H1 (cell line): ENCODE measurements at regions of chr1 and their contacts with region 1.

Region 1: DNA sequence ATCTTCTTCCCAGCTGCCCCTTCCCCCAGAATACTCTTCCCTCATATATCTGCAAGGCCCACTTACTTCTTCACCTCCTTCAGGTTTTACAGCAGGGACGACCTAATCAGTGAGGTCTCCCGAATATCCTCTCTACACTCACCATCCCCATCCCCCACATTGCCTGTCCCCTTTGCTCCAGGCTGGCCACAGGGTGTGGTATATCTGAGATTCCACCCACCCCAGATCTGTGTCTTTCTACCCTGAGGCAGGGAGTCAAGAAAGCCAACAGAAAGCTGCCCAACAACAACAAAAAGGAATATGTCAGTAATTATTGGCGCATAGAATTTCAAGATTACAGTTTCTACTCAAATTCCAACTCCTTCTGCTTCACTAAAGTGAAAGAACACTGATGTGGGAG is 30.0 kb upstream of the OPRD1 start:
- DNase-seq: no peak
- H3K4me3 ChIP-seq: no peak overlapping the region
- H3K27ac ChIP-seq: no peak overlapping the region
- H3K4me1 ChIP-seq: no peaks in the 10 kb centered on the region
- H3K27me3 ChIP-seq: no peaks in the 10 kb centered on the region
- CTCF ChIP-seq: no peak
- EP300 ChIP-seq: no peak
- POLR2A ChIP-seq: no peak
- RAD21 ChIP-seq: no peak

Region 2: GRCh38 chr1:28792644-28793121 is 10.7 kb after region 1 on chr1:
- CTCF ChIA-PET with region 1: interaction called, 35 read pairs
- POLR2A ChIA-PET with region 1: interaction called, 5 read pairs
- DNase-seq: no peak
- H3K4me3 ChIP-seq: no peak overlapping the region
- H3K27ac ChIP-seq: no peak overlapping the region
- H3K4me1 ChIP-seq: peaks cover 0 to 8% (median 2%) of the 10 kb centered on the region in 4 experiments; a peak in 2 of 7 replicates
- H3K27me3 ChIP-seq: no peaks in the 10 kb centered on the region
- CTCF ChIP-seq: no peak
- EP300 ChIP-seq: no peak
- POLR2A ChIP-seq: no peak
- RAD21 ChIP-seq: no peak

Region 3: DNA sequence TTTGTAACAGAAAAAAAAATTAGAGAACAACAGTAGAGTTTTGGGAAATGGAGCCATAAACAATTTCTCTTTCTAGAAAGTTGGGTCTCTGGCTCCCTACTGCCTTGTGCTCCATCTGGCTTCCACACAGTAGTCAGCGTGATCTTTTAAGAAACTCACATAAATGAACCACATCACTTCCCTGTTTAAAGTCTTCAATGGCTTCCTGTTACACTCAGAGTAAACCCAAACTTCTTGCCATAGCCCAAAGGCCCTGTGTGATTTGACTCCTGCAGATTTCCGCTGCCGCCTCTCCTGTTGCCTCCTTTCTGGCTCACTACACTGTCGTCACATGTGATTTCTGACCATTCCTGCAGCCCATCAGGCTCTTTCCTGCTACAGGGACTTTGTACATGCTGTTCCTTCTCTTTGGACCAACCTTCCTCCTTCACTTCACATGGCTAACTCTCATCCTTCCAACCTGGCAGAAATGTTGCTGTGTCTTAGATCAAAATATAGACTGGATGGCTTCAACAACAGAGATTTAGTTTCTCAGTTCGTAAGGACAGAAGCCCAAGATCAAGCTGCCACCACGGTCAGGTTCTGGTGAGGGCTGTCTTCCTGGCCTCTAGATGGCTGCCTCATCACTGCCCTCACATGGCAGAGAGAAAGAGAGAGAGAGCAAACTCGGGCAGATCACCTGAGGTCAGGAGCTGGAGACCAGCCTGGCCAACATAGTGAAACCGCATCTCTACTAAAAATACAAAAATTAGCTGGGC is 64.0 kb after region 1 on chr1:
- CTCF ChIA-PET with region 1: interaction called, 16 read pairs
- POLR2A ChIA-PET with region 1: no interaction called
- DNase-seq: no peak
- H3K4me3 ChIP-seq: no peak overlapping the region
- H3K27ac ChIP-seq: peak overlapping the region; percentile 11; the same call in 1 of the 2 replicates
- H3K4me1 ChIP-seq: no peaks in the 10 kb centered on the region; a peak in 1 of 7 replicates
- H3K27me3 ChIP-seq: no peaks in the 10 kb centered on the region
- CTCF ChIP-seq: peak; percentile 42 to 46 (median 43)
- EP300 ChIP-seq: no peak
- POLR2A ChIP-seq: no peak
- RAD21 ChIP-seq: peak; percentile 46 to 51

Region 4: DNA sequence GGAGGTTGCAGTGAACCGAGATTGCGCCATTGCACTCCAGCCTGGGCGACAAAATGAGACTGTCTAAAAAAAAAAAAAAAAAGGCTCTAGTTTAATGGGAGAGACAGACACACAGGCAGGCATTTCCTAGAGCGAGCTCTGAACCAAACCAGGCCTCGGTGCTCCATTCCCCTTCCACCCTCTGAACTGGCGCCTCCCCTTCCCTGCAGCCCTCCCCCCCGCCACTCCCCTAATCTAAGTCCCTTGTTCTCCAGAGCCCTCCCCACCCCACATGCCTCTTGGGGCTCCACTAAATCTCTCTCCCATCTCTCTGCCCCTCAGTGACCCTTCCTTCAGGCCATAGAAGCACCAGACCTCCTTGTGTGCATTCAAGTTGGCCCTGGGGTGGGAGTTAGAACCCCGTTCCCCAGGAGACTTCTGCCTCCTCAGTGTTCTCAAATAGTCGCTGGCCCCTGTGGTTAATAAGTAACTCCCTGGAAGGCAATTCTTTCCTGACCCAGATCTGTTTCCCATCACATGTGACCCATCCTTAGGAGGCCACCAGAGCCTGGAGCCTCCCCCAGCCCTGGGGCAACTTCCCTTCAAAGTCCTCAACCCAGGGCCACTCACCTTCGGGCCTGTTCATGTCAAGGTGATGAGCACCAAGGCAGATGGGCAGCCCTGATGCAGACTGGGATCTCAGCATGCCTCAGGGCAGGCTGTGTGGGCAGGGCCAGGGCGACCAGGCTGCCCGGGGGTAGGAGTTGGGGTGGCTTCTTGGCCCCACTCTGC is 89.8 kb after region 1 on chr1:
- CTCF ChIA-PET with region 1: interaction called, 160 read pairs
- POLR2A ChIA-PET with region 1: interaction called, 4 read pairs
- DNase-seq: no peak
- H3K4me3 ChIP-seq: no peak overlapping the region
- H3K27ac ChIP-seq: no peak overlapping the region
- H3K4me1 ChIP-seq: no peaks in the 10 kb centered on the region
- H3K27me3 ChIP-seq: no peaks in the 10 kb centered on the region
- CTCF ChIP-seq: no peak
- EP300 ChIP-seq: no peak
- POLR2A ChIP-seq: no peak
- RAD21 ChIP-seq: no peak